Dendritic cell treated with granulocyte-macrophage colony-stimulating factor and Interleukin-4, amounts not matched to agents 40 ng/mL and 50 ng/mL, for 4 days (primary cell): ENCODE measurements at regions of chr12 and their contacts with region 1.

Region 1: GRCh38 chr12:5442251-5443006 is 10.5 kb downstream of the NTF3 start:
- H3K4me3 Mint-ChIP-seq: no peak overlapping the region
- H3K27ac Mint-ChIP-seq: no peak overlapping the region
- H3K4me1 Mint-ChIP-seq: peaks cover 25% of the 10 kb centered on the region
- H3K27me3 Mint-ChIP-seq: peaks cover 43% of the 10 kb centered on the region

Region 2: GRCh38 chr12:5022465-5023061 is 419.9 kb before region 1 on chr12:
- intact Hi-C with region 1: loop called (anchors 5 kb)
- H3K4me3 Mint-ChIP-seq: no peak overlapping the region
- H3K27ac Mint-ChIP-seq: no peak overlapping the region
- H3K4me1 Mint-ChIP-seq: no peaks in the 10 kb centered on the region
- H3K27me3 Mint-ChIP-seq: peaks cover 19% of the 10 kb centered on the region

Region 3: GRCh38 chr12:5171701-5172100 is 270.7 kb before region 1 on chr12:
- intact Hi-C with region 1: loop called (anchors 5 kb)
- H3K4me3 Mint-ChIP-seq: no peak overlapping the region
- H3K27ac Mint-ChIP-seq: no peak overlapping the region
- H3K4me1 Mint-ChIP-seq: no peaks in the 10 kb centered on the region
- H3K27me3 Mint-ChIP-seq: peaks cover 5% of the 10 kb centered on the region

Region 4: DNA sequence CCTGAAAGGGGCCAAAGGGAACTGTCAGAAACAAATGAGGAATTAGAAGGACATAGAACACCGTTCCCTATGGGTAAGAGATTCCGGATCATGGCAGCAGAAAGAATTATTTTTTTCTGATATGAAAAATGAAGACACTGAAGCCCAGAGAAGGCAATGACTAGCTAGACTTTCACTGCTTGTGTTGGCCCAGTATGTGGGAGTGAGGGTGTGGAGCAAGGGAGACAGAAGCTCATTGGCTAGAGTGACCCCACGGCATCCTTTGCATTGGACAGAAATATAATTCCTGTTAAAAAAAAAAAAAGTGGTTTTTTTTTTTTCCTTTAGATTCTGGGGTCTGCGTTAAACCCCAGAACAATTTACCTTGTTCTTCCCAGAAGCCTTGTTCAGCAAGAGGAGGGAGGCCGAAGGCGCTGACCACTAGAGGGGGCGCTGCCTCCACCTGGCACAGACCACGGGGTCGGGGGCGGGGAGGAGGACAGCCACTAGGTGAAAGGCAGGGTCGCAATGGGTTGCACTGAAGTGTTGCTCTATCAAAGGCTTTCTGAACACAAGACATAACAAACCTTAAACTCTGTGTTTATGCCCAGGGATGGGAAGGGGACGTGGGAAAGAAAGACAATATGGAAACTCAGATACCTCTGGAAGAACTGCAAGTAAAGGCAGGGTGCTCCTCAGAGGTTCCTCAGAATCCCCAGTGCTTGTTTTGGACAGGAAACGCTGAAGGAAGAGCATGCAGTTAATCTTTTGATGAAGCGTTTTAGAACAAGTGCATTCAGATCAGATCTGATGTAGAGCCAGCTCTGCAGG is 241.9 kb before region 1 on chr12:
- intact Hi-C with region 1: loop called (anchors 10 kb)
- H3K4me3 Mint-ChIP-seq: no peak overlapping the region
- H3K27ac Mint-ChIP-seq: no peak overlapping the region
- H3K4me1 Mint-ChIP-seq: no peaks in the 10 kb centered on the region
- H3K27me3 Mint-ChIP-seq: peaks cover 12% of the 10 kb centered on the region